Heart left ventricle (tissue), 16 donors: ENCODE measurements at regions of chr6 and their contacts with region 1.

Region 1: DNA sequence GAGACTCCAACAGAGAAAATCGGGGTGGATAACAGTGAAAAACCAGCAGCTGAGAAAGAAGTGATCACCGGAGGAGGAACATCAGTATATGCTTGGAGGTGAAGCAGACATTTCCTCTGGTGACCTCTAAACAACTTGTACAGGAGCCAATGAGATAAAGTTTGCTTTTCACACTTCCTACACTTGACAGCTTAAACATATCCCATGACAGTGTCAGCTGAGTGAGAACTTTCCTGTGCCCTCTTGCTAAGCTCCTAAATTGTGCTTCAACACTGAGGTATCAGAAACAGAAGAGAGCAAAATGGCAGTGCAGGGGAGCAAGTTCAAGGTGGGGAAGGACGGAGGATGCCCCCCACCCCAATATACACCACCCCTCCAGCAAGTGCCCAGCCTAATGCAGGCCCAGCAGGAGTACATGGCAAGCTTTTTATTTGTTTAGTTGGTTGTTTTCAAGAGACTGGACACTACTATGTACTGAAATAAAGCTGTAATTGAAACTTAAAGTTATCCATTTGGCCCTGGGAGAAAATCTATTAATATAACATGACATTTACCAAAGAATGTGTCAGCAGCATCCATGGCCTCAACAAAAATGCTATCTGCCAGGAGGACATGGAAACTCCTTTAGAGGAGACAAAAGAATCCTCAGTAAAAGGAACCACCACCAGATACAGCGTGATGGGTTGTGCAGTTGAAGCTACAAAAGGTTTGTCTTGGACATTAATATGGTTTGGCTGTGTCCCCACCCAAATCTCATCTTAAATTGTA is 540.2 kb downstream of the PRKN start:
- DNase-seq: peak in 3 of 5 donors; percentile 29 to 43 (median 31)
- ATAC-seq: peak; percentile 96 to 97 (median 96)
- H3K4me3 ChIP-seq: no peak overlapping the region
- H3K27ac ChIP-seq: peak overlapping the region; percentile 55 to 94 (median 80)
- H3K4me1 ChIP-seq: peaks cover 0 to 31% (median 6%) of the 10 kb centered on the region in 12 donors
- H3K27me3 ChIP-seq: no peaks in the 10 kb centered on the region
- CTCF ChIP-seq: no peak
- POLR2A ChIP-seq: no peak

Region 2: DNA sequence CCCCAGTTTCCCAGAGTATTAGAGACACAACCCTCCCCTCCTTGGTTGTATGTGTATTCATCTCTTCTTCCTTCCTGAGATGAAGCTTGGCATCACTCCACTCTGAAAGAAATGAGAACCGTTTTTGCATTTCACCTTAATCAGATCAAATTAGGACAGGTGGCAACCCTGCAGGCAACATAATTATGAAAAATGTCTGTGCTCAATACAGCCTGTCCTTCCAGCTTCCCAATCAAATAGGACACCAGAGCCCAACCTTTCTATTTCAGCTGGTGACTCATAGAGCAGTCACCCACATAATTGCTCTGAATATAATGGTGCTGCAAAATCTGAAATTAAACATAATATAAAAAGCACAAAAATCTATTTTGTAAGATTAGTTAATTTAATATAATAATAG is 603.3 kb before region 1 on chr6:
- intact Hi-C with region 1: no loop called
- DNase-seq: no peak
- ATAC-seq: no peak
- H3K4me3 ChIP-seq: no peak overlapping the region
- H3K27ac ChIP-seq: no peak overlapping the region
- H3K4me1 ChIP-seq: no peaks in the 10 kb centered on the region
- H3K27me3 ChIP-seq: no peaks in the 10 kb centered on the region
- CTCF ChIP-seq: no peak
- POLR2A ChIP-seq: no peak

Region 3: DNA sequence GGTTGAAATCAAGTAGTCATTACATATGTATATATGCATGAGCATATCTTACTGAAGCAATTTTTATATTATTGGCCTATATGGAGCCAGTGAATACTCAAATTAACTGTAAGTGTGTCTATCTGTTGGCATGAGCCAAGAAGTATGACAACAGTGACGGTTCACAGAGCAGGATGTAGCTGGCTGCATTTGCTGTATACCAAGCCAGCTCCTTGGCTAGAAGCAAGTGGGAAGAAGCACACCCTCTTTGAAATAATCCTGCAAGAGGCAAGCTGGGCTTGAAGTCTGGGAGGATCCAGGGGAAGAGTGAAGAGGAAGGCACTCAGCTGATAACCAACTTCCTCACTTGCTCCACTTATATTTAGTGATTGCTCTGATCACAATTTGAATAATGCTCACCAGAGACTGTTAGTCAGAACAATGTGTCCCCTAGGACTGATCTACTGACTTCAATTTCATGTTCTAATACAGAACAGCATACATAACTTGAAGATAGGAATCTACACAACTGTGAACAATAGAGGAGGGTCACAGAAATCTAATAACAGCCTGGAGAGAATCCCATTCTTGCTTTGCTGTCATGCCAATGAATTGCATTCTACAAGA is 42.9 kb after region 1 on chr6:
- intact Hi-C with region 1: loop called in 2 of 10 experiments (anchors 5 kb)
- DNase-seq: peak in 1 of 5 donors; percentile 12
- ATAC-seq: peak; percentile 62 to 85 (median 77)
- H3K4me3 ChIP-seq: no peak overlapping the region
- H3K27ac ChIP-seq: peak overlapping the region in 8 of 12 donors; percentile 8 to 49 (median 29)
- H3K4me1 ChIP-seq: peaks cover 0 to 45% (median 16%) of the 10 kb centered on the region in 12 donors
- H3K27me3 ChIP-seq: no peaks in the 10 kb centered on the region
- CTCF ChIP-seq: no peak
- POLR2A ChIP-seq: no peak

Region 4: DNA sequence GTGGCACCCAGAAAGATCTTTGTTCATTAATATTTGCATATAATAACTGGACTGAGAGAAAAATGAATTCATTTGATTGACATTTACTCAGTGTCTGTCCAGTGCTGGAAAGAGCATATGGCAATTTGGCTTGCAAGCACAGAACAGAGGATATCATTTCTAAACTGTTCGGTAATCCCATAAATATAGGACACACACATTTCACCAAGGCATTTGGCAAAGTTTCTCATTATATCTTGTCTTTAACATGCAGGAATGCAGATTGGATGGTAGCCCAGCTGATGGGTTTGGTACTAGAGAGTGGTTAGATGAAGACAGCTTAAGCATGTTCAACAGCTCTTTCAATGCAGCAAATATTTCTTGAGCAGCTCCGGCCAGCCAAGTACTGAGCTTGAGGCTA is 281.0 kb after region 1 on chr6:
- intact Hi-C with region 1: loop called in 5 of 10 experiments (anchors 5 to 10 kb)
- DNase-seq: peak in 4 of 5 donors; percentile 57 to 72 (median 64)
- ATAC-seq: peak; percentile 83 to 94 (median 90)
- H3K4me3 ChIP-seq: no peak overlapping the region
- H3K27ac ChIP-seq: peak overlapping the region in 11 of 12 donors; percentile 47 to 89 (median 82)
- H3K4me1 ChIP-seq: peaks cover 0 to 13% (median 0%) of the 10 kb centered on the region in 12 donors
- H3K27me3 ChIP-seq: no peaks in the 10 kb centered on the region
- CTCF ChIP-seq: no peak
- POLR2A ChIP-seq: no peak

Region 5: DNA sequence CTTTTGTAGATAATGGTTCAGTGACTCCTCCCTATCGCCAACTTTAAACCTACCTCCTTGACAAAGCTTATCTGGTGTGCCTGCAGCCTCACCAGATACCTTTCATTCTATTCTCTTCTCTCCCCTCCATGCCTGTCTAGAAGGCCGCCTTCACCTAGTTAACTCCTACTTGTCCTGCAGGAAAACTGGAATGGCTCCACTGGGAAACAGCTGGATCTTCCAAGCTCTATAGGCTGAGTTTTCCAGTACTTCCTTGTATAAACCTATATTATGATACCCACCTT is 534.0 kb after region 1 on chr6:
- intact Hi-C with region 1: loop called in 3 of 10 experiments (anchors 5 to 10 kb)
- DNase-seq: no peak
- ATAC-seq: peak; percentile 27 to 70 (median 48)
- H3K4me3 ChIP-seq: no peak overlapping the region
- H3K27ac ChIP-seq: peak overlapping the region; percentile 39 to 96 (median 82)
- H3K4me1 ChIP-seq: peaks cover 0 to 35% (median 10%) of the 10 kb centered on the region in 12 donors
- H3K27me3 ChIP-seq: no peaks in the 10 kb centered on the region
- CTCF ChIP-seq: no peak
- POLR2A ChIP-seq: no peak